H1 (cell line): ENCODE measurements at regions of chr4 and their contacts with region 1.

Region 1: GRCh38 chr4:151489462-151490203 is 80.7 kb downstream of the FHIP1A start:
- DNase-seq: peak; percentile 66 to 76
- H3K4me3 ChIP-seq: no peak overlapping the region
- H3K27ac ChIP-seq: no peak overlapping the region
- H3K4me1 ChIP-seq: peaks cover 2 to 13% (median 10%) of the 10 kb centered on the region in 4 experiments; a peak in 5 of 7 replicates
- H3K27me3 ChIP-seq: no peaks in the 10 kb centered on the region
- CTCF ChIP-seq: peak; percentile 78 to 91 (median 81)
- EP300 ChIP-seq: no peak
- POLR2A ChIP-seq: no peak
- RAD21 ChIP-seq: peak; percentile 85

Region 2: DNA sequence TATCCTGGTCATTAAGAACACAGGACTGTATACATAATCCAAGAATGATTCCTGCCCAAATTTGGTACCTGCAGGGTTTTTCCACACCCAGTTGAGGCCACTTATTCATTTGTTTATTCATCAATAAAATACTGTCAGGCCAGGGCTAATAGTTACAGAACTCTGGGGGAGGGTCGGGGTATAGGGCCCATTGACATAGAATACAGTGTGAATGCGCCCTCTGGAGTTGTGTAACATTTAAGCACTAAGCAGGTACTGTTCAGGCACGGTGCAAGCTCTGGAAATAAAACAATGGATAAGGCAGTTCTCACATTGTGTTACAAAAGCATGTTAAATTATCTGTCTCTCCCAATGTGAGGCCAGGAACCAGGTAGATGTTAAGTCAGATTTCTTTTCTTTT is 443.7 kb before region 1 on chr4:
- CTCF ChIA-PET with region 1: no interaction called
- POLR2A ChIA-PET with region 1: no interaction called
- DNase-seq: peak in 1 of 2 experiments; percentile 52
- H3K4me3 ChIP-seq: no peak overlapping the region
- H3K27ac ChIP-seq: no peak overlapping the region
- H3K4me1 ChIP-seq: peaks cover 4 to 7% (median 4%) of the 10 kb centered on the region in 4 experiments; a peak in 5 of 7 replicates
- H3K27me3 ChIP-seq: no peaks in the 10 kb centered on the region
- CTCF ChIP-seq: peak in 2 of 3 experiments; percentile 53 to 54; a peak in 3 of 4 replicates
- EP300 ChIP-seq: no peak
- POLR2A ChIP-seq: no peak
- RAD21 ChIP-seq: peak; percentile 68 to 79

Region 3: DNA sequence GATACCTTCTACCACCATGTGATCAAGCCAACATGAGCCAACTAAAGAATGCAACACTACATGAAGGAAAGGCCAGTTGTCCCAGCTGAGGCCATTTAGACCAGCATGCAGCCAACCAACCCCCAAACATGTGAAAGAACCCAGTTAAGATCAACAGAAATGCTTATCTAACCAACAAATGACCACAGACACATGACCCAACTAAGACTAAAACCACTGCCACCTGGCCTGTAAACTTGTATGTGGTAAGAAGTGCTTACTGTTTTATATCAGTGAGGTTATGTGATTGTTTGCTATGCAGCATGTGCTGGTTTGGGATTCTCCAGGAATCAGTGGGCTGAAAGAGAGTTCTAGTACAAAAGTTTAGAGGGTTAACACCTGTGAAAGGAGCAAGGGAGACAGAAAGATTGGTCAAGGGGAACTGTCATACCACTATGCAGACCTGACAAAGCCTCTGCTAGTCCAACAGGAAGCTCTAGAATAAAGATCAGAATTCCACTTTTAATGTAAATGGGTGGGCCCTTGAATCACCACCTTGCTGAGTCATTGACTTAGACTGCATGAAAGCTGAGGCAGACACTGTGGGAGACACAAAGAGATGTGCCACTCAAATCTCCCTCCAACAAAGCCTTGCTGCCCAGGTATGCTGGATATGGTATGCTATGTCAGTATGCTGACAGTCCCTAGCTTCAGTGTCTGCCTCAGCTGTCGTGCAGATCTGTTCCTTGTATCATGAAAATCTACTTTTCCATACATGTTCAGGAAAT is 158.2 kb before region 1 on chr4:
- CTCF ChIA-PET with region 1: no interaction called
- POLR2A ChIA-PET with region 1: no interaction called
- DNase-seq: no peak
- H3K4me3 ChIP-seq: no peak overlapping the region
- H3K27ac ChIP-seq: no peak overlapping the region
- H3K4me1 ChIP-seq: no peaks in the 10 kb centered on the region
- H3K27me3 ChIP-seq: no peaks in the 10 kb centered on the region
- CTCF ChIP-seq: no peak
- EP300 ChIP-seq: no peak
- POLR2A ChIP-seq: no peak
- RAD21 ChIP-seq: no peak

Region 4: GRCh38 chr4:151604238-151604637 is 114.6 kb after region 1 on chr4:
- CTCF ChIA-PET with region 1: interaction called, 12 read pairs
- POLR2A ChIA-PET with region 1: no interaction called
- DNase-seq: no peak
- H3K4me3 ChIP-seq: no peak overlapping the region
- H3K27ac ChIP-seq: no peak overlapping the region
- H3K4me1 ChIP-seq: peaks cover 0 to 5% (median 0%) of the 10 kb centered on the region in 4 experiments; a peak in 3 of 7 replicates
- H3K27me3 ChIP-seq: no peaks in the 10 kb centered on the region
- CTCF ChIP-seq: peak in 2 of 3 experiments; percentile 20 to 32; a peak in 1 of 4 replicates
- EP300 ChIP-seq: no peak
- POLR2A ChIP-seq: no peak
- RAD21 ChIP-seq: peak; percentile 43 to 50

Region 5: GRCh38 chr4:151614561-151614960 is 124.9 kb after region 1 on chr4:
- CTCF ChIA-PET with region 1: interaction called, 16 read pairs
- POLR2A ChIA-PET with region 1: no interaction called
- DNase-seq: no peak
- H3K4me3 ChIP-seq: no peak overlapping the region
- H3K27ac ChIP-seq: no peak overlapping the region
- H3K4me1 ChIP-seq: no peaks in the 10 kb centered on the region
- H3K27me3 ChIP-seq: no peaks in the 10 kb centered on the region
- CTCF ChIP-seq: no peak
- EP300 ChIP-seq: no peak
- POLR2A ChIP-seq: no peak
- RAD21 ChIP-seq: no peak